Activated T-helper 2 cell treated with anti-CD3 and anti-CD28 coated beads, Interferon-gamma antibody, Interleukin-2, Interleukin-4, amounts not matched to agents 10 μg/mL and 5 μg/mL and 100 μg/mL, durations not matched to agents 14 hours and 24 hours and 36 hours (primary cell): ENCODE measurements at regions of chr17 and their contacts with region 1.

Region 1: GRCh38 chr17:49997791-49998703 is 3.0 kb upstream of the DLX3 start:
- DNase-seq: peak; percentile 77
- H3K4me3 Mint-ChIP-seq: no peak overlapping the region
- H3K27ac Mint-ChIP-seq: no peak overlapping the region
- H3K4me1 Mint-ChIP-seq: peaks cover 20% of the 10 kb centered on the region
- H3K27me3 Mint-ChIP-seq: peaks cover 65% of the 10 kb centered on the region

Region 2: GRCh38 chr17:49861150-49861892 is 136.7 kb before region 1 on chr17:
- intact Hi-C with region 1: loop called (anchors 1 kb)
- DNase-seq: peak; percentile 16
- H3K4me3 Mint-ChIP-seq: no peak overlapping the region
- H3K27ac Mint-ChIP-seq: no peak overlapping the region
- H3K4me1 Mint-ChIP-seq: peaks cover 4% of the 10 kb centered on the region
- H3K27me3 Mint-ChIP-seq: peaks cover 14% of the 10 kb centered on the region

Region 3: GRCh38 chr17:49880291-49881053 is 117.6 kb before region 1 on chr17:
- intact Hi-C with region 1: loop called (anchors 1 kb)
- DNase-seq: peak; percentile 63
- H3K4me3 Mint-ChIP-seq: peak overlapping the region; percentile 8
- H3K27ac Mint-ChIP-seq: no peak overlapping the region
- H3K4me1 Mint-ChIP-seq: peaks cover 5% of the 10 kb centered on the region
- H3K27me3 Mint-ChIP-seq: peaks cover 31% of the 10 kb centered on the region

Region 4: GRCh38 chr17:49926886-49927285 is 71.2 kb before region 1 on chr17:
- intact Hi-C with region 1: no loop called
- DNase-seq: no peak
- H3K4me3 Mint-ChIP-seq: no peak overlapping the region
- H3K27ac Mint-ChIP-seq: no peak overlapping the region
- H3K4me1 Mint-ChIP-seq: no peaks in the 10 kb centered on the region
- H3K27me3 Mint-ChIP-seq: peaks cover 11% of the 10 kb centered on the region

Region 5: DNA sequence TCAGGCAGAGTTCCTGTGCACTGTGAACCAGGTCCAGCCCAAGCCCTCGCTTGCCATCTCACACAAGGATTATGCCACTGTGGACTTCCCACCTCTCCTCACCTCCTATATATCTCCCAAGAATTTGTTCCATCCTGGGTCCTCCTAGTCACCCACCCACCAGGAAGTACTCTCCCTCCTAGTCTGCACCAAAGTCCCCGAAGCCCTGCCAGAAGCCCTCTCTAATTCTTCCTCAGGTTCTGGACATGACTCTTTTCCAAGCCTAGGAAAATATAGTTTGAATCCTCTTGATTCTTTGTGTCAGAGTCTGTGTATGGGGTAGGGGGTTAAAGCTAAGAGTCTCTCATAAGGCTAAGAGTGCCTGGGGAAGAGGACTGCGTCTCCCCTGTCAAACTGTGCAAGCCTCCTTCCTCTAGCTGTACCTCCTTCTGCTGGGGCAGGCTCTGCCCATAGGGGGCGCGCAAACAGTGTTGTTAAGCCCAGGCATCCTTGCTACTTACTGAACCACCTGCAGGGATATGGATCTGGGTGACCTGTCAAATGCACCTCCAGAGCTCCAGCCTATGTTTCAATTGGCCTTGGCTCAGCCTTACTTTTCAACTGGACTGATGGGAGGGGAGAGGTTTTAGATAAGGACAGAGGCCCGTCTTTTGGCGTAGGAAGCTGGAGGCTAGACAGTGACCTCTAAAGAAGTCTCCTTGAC is 45.7 kb before region 1 on chr17:
- intact Hi-C with region 1: loop called (anchors 1 kb)
- DNase-seq: peak; percentile 64
- H3K4me3 Mint-ChIP-seq: no peak overlapping the region
- H3K27ac Mint-ChIP-seq: no peak overlapping the region
- H3K4me1 Mint-ChIP-seq: no peaks in the 10 kb centered on the region
- H3K27me3 Mint-ChIP-seq: peaks cover 32% of the 10 kb centered on the region

Region 6: GRCh38 chr17:49968380-49969133 is 29.5 kb before region 1 on chr17:
- intact Hi-C with region 1: loop called (anchors 2 kb)
- DNase-seq: peak; percentile 58
- H3K4me3 Mint-ChIP-seq: peak overlapping the region; percentile 82
- H3K27ac Mint-ChIP-seq: no peak overlapping the region
- H3K4me1 Mint-ChIP-seq: peaks cover 19% of the 10 kb centered on the region
- H3K27me3 Mint-ChIP-seq: peaks cover 88% of the 10 kb centered on the region

Region 7: GRCh38 chr17:50020841-50021599 is 23.0 kb after region 1 on chr17:
- intact Hi-C with region 1: no loop called
- DNase-seq: no peak
- H3K4me3 Mint-ChIP-seq: no peak overlapping the region
- H3K27ac Mint-ChIP-seq: no peak overlapping the region
- H3K4me1 Mint-ChIP-seq: no peaks in the 10 kb centered on the region
- H3K27me3 Mint-ChIP-seq: peaks cover 17% of the 10 kb centered on the region